Sigmoid colon (tissue), 7 donors: ENCODE measurements at regions of chr19 and their contacts with region 1.

Region 1: GRCh38 chr19:48513289-48514122 is 1.9 kb upstream of the LMTK3 start:
- DNase-seq: peak; percentile 75
- H3K4me3 ChIP-seq: peak overlapping the region; percentile 23 to 60 (median 54)
- H3K27ac ChIP-seq: no peak overlapping the region
- H3K4me1 ChIP-seq: peaks cover 0 to 20% (median 15%) of the 10 kb centered on the region in 4 donors
- H3K27me3 ChIP-seq: peaks cover 18 to 43% (median 41%) of the 10 kb centered on the region in 3 donors
- CTCF ChIP-seq: no peak
- EP300 ChIP-seq: no peak
- POLR2A ChIP-seq: no peak

Region 2: DNA sequence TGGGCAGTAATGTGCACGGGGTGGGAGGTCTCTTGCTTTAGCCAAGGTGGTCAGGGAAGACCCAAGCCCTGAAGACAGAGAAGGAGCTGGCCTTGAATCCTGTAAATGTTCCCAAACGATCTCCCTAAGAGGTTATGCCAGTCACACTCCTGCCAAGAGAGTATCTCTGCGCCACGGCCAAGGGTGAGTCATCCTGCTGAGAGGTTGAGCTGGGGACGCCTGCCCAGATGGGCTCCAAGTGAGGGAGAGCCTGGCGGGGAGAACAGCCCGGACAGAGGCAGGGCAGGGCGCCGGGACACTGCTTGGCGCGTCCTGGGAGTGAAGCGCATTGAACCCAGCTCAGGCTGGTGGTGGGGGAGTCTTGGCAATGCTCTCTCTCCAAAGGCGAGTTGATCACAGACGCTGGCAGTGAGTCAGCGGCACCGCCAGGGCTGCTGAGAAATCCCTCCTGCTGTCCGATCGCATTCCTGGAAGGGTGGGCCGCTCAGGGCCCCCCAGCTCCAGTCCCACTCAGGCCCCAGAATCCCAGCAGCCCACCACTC is 54.9 kb after region 1 on chr19:
- intact Hi-C with region 1: loop called (anchors 5 kb)
- DNase-seq: peak; percentile 95
- H3K4me3 ChIP-seq: no peak overlapping the region
- H3K27ac ChIP-seq: peak overlapping the region; percentile 74 to 86 (median 80)
- H3K4me1 ChIP-seq: peaks cover 0 to 16% (median 13%) of the 10 kb centered on the region in 4 donors
- H3K27me3 ChIP-seq: no peaks in the 10 kb centered on the region
- CTCF ChIP-seq: no peak
- EP300 ChIP-seq: no peak
- POLR2A ChIP-seq: no peak